ENCODE measurements at regions of chr1 and their contacts with region 1.

Region 1: DNA sequence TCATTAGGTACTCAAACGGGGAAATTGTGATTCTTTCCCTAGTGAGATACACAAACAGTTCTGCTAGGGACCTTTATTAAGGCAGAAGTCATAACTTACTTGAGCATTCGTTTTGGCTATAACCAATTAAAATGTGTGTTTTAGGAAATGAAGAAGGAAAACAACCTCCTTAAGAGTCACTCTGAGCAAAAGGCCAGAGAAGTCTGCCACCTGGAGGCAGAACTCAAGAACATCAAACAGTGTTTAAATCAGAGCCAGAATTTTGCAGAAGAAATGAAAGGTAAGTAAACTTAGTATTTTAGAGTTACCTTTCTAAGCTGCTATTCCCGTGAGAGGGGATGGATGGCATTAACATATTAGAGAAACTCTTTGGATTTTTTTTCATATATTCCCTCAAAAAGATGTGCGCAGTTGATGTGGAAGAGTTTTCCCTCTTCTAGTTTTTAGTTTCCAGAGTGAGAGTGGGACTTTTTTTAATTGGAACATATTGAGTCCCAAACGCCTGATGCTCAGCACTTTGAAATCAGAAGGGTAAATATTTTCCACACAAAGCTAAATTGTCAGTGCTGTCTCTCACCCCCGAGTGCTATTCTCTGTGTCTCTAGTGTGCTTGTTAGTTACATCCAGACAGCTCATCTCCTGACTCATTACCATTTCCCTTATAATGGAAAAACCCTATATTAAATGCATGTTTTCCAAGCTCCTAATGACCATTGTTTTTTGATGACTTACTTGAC is 34.9 kb downstream of the CENPF start:
- DNase-seq: no peak
- H3K4me3 ChIP-seq: no peak overlapping the region
- H3K27ac ChIP-seq: no peak overlapping the region
- H3K4me1 ChIP-seq: no peaks in the 10 kb centered on the region
- H3K27me3 ChIP-seq: no peaks in the 10 kb centered on the region
- CTCF ChIP-seq: peak; percentile 44

Region 2: GRCh38 chr1:215526553-215527151 is 888.8 kb after region 1 on chr1:
- intact Hi-C with region 1: loop called (anchors 10 kb)
- DNase-seq: no peak
- H3K4me3 ChIP-seq: no peak overlapping the region
- H3K27ac ChIP-seq: no peak overlapping the region
- H3K4me1 ChIP-seq: no peaks in the 10 kb centered on the region
- H3K27me3 ChIP-seq: no peaks in the 10 kb centered on the region
- CTCF ChIP-seq: peak; percentile 70

Measured in colonic mucosa (tissue), 4 donors.